ENCODE measurements at regions of chr22 and their contacts with region 1.

Region 1: DNA sequence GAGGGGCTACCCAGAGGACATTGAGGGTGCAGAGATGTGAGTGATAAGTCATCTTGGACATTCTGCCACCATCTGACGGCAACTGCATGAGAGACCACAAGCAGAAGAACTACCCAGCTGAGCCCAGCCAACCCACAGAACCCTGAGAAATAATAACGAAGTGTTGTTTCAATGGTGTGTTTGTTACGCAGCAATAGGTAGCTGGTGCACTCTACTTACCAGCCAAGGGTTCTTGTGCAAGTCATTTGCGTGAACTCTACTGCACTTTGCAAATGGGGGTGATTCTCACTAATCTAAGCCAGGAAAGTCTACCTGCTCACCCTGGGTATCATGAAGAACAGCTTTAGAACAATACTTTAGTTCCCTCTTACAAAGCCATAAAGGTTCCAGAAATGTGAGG is 15.8 kb upstream of the CELSR1 start:
- DNase-seq: no peak
- H3K4me3 ChIP-seq: no peak overlapping the region
- H3K4me3 Mint-ChIP-seq: no peak overlapping the region
- H3K27ac ChIP-seq: no peak overlapping the region
- H3K27ac Mint-ChIP-seq: no peak overlapping the region
- H3K4me1 ChIP-seq: no peaks in the 10 kb centered on the region
- H3K4me1 Mint-ChIP-seq: no peaks in the 10 kb centered on the region
- H3K27me3 ChIP-seq: no peaks in the 10 kb centered on the region
- H3K27me3 Mint-ChIP-seq: peaks cover 19 to 34% of the 10 kb centered on the region in 2 donors

Region 2: GRCh38 chr22:46563381-46564083 is 10.3 kb after region 1 on chr22:
- CTCF ChIA-PET with region 1: interaction called, 11 read pairs
- POLR2A ChIA-PET with region 1: no interaction called
- DNase-seq: peak; percentile 49 to 78 (median 63)
- H3K4me3 ChIP-seq: no peak overlapping the region
- H3K4me3 Mint-ChIP-seq: peak overlapping the region in 3 of 7 donors; percentile 26 to 31 (median 26)
- H3K27ac ChIP-seq: no peak overlapping the region
- H3K27ac Mint-ChIP-seq: peak overlapping the region in 3 of 8 donors; percentile 32 to 57 (median 40)
- H3K4me1 ChIP-seq: no peaks in the 10 kb centered on the region
- H3K4me1 Mint-ChIP-seq: peaks cover 0 to 2% (median 0%) of the 10 kb centered on the region in 3 donors
- H3K27me3 ChIP-seq: no peaks in the 10 kb centered on the region
- H3K27me3 Mint-ChIP-seq: peaks cover 0 to 3% of the 10 kb centered on the region in 2 donors

Measured in CD8-positive, alpha-beta memory T cell (primary cell).